CD4-positive, alpha-beta T cell (primary cell): ENCODE measurements at regions of chr1 and their contacts with region 1.

Region 1: DNA sequence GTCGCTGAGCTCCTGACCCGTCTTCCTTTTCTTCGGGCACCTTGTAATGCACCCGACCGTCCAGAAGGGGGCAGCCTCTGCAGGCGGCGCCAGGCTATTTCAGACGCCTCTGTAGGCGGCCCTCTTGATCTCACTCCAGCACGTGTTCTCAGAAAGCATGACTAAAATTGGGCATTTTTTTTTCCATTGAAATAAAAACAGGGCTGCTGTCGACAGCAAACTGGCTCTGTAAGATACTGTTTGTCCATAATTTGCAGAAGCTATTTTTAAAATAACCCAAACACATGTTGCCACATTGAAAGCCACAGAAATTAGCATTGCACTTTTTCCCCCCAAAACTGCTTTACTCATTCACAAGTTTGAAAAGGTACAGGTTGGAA is 78.0 kb downstream of the STUM start:
- DNase-seq: peak; percentile 65 to 88 (median 73)
- ATAC-seq: peak; percentile 97
- H3K4me3 ChIP-seq: peak overlapping the region; percentile 43
- H3K4me3 Mint-ChIP-seq: no peak overlapping the region
- H3K27ac ChIP-seq: no peak overlapping the region
- H3K27ac Mint-ChIP-seq: peak overlapping the region; percentile 46
- H3K4me1 ChIP-seq: peaks cover 18% of the 10 kb centered on the region
- H3K4me1 Mint-ChIP-seq: peaks cover 22% of the 10 kb centered on the region
- H3K27me3 ChIP-seq: no peaks in the 10 kb centered on the region
- H3K27me3 Mint-ChIP-seq: no peaks in the 10 kb centered on the region
- CTCF ChIP-seq: peak; percentile 99

Region 2: DNA sequence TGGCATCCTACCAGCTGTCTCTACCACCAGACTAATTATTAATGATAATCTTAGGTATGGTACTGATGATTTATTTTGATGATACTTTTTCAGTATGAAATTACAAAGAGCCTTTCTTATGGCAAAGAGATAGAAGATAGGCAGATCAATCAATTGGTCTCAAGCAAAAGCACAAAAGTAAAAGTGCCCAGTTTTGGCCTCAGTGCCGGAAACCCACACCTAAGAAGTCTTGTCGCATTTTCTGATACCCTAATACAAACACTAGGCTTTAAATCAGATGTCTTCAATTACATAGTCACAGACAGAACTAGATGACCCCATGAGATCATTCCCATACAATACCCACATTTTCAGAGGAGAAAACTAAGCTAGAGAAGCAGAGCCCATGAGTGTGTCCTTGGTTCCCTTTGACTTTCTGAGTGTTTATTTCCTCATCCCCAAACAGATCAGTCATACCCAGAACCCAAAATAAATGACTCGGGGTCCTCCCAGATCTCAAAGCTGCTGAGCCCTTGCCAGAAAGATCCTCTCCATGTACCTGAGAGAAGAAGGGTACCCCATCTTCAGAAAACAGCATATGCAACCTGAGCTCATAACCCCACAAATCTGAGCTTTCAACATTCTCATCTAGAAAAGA is 104.8 kb after region 1 on chr1:
- CTCF ChIA-PET with region 1: interaction called, 11 read pairs
- POLR2A ChIA-PET with region 1: no interaction called
- intact Hi-C with region 1: no loop called
- DNase-seq: peak in 1 of 14 experiments; percentile 26
- ATAC-seq: no peak
- H3K4me3 ChIP-seq: peak overlapping the region; percentile 93
- H3K4me3 Mint-ChIP-seq: peak overlapping the region; percentile 95
- H3K27ac ChIP-seq: peak overlapping the region; percentile 60 to 75
- H3K27ac Mint-ChIP-seq: peak overlapping the region; percentile 95
- H3K4me1 ChIP-seq: peaks cover 69% of the 10 kb centered on the region
- H3K4me1 Mint-ChIP-seq: peaks cover 79% of the 10 kb centered on the region
- H3K27me3 ChIP-seq: no peaks in the 10 kb centered on the region
- H3K27me3 Mint-ChIP-seq: no peaks in the 10 kb centered on the region
- CTCF ChIP-seq: no peak

Region 3: DNA sequence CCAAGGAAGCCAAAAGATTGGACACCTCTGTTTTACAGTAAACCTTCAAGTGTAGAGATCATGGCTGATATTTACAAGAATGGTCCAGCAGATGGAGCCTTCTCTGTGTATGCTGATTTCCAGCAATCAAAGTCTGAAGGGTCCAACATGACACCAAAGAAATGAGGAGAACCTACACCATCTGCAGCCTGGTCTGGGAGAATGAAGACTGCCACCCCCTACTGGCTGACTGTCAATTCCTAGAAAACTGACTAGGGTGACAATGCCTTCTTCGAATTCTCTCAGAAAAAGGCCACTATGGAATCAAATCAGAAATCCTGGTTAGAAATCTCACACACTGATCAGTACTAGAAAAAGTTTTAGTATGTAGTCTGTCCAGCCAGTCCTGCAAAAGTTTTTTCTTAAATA is 608.4 kb after region 1 on chr1:
- CTCF ChIA-PET with region 1: no interaction called
- POLR2A ChIA-PET with region 1: no interaction called
- intact Hi-C with region 1: no loop called
- DNase-seq: peak in 1 of 14 experiments; percentile 8
- ATAC-seq: no peak
- H3K4me3 ChIP-seq: no peak overlapping the region
- H3K4me3 Mint-ChIP-seq: no peak overlapping the region
- H3K27ac ChIP-seq: no peak overlapping the region
- H3K27ac Mint-ChIP-seq: no peak overlapping the region
- H3K4me1 ChIP-seq: no peaks in the 10 kb centered on the region
- H3K4me1 Mint-ChIP-seq: no peaks in the 10 kb centered on the region
- H3K27me3 ChIP-seq: peaks cover 4 to 16% of the 10 kb centered on the region in 2 experiments
- H3K27me3 Mint-ChIP-seq: peaks cover 30% of the 10 kb centered on the region
- CTCF ChIP-seq: peak; percentile 27